Activated CD4-positive, alpha-beta memory T cell treated with anti-CD3 and anti-CD28 coated beads for 36 hours (primary cell): ENCODE measurements at regions of chr5 and their contacts with region 1.

Region 1: DNA sequence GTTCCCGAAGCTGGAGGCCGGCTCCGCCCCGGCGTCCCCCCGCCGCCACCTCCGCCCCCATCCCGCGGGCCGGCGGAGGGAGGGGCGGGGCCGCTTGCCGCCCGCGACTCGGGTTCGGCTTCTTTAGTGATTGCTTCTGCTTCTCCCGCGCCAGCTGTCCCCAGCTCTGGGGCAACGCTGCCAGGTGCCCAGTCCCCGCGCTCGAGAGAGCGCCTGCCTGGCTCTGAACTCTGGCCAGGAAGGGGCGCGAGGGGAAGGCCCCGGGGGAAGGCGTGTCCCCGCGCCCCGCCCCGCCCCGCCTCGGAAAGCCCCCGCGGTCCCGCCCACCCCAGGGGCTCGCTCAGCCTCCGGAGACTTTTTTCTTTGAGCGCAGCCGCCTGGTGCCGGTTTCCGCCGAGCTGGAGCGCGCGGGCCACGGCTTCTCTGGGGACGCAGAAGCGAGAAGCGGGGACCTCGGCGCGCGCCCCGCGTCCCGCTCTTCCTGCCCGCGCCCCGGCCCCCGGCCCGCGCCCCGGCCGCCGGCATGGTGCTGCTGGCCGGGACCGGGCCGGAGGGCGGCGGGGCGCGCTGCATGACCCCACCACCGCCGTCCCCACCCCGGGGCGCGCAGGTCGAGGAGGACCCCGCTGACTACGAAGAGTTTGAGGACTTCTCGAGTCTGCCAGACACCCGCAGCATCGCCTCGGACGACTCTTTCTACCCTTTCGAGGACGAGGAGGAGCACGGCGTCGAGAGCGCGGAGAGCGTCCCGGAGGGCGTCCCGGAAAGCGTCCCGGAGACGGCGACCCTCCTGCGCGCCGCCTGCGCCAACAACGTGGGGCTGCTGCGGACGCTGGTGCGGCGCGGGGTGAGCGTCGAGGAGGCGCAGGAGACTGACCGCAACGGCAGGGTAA is at the start of gene ANKRD33B:
- DNase-seq: peak; percentile 88
- H3K4me3 Mint-ChIP-seq: peak within 1 kb of the TSS; percentile 84
- H3K27ac Mint-ChIP-seq: peak within 1 kb of the TSS; percentile 79
- H3K4me1 Mint-ChIP-seq: peaks cover 21% of the 10 kb centered on the region
- H3K27me3 Mint-ChIP-seq: peaks cover 3% of the 10 kb centered on the region
- total RNA-seq, gene ANKRD33B: 9.9 to 10.0 TPM

Region 2: DNA sequence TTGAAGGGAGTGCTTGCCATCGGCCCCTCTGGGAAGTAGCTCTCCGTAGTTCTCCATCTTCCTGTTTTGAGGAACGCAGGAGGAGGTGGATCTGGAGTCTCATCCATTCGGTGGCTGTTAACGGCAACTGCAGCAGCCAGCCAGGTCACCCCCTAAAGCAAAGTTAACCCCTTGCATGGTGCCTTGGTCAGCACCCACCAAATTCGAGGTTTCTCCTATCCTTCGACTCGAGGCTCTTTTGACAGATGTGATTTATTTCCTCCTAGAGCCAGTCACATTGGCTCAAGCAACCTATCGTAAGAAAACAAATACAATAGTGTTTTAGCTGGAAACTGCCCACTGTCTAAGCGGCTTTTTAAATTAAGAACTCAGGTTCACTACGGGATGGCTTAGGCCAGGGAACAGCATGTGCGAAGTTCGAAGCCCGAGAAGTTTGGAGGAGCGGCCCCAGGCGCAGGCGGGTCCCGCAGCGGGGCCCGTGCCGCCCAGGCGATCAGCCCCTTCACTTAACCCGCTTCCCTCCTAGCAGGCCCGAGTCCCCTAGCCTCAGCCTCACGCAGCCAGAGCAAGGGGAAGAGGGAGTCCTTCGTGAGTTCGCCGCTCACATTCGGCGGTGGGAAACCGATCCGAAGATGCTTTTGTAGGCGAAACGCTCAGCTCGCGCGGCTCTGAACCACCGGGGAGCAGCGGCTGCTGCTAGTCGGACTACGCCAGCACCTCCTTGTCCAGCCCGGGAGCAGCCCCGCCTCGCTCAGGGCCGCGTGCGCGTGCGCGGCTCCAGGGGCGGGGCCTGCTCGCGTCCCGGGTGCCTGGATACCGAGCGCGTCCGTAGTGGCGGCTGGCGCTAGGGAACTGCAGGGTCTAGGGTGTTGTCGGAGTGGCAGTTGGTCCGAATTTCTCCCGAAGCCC is 122.9 kb before region 1 on chr5 and contains the start of gene ROPN1L:
- CTCF ChIA-PET with region 1: no interaction called
- POLR2A ChIA-PET with region 1: no interaction called
- intact Hi-C with region 1: loop called (anchors 10 kb)
- DNase-seq: peak; percentile 86
- H3K4me3 Mint-ChIP-seq: peak within 1 kb of the TSS; percentile 78
- H3K27ac Mint-ChIP-seq: no peak within 1 kb of the TSS
- H3K4me1 Mint-ChIP-seq: peaks cover 33% of the 10 kb centered on the region
- H3K27me3 Mint-ChIP-seq: no peaks in the 10 kb centered on the region
- total RNA-seq, gene ROPN1L: not detected

Region 3: GRCh38 chr5:10577371-10578292 is 13.4 kb after region 1 on chr5:
- CTCF ChIA-PET with region 1: interaction called, 4 read pairs
- POLR2A ChIA-PET with region 1: interaction called, 3 read pairs
- intact Hi-C with region 1: loop called (anchors 1 kb)
- DNase-seq: no peak
- H3K4me3 Mint-ChIP-seq: no peak overlapping the region
- H3K27ac Mint-ChIP-seq: no peak overlapping the region
- H3K4me1 Mint-ChIP-seq: peaks cover 57% of the 10 kb centered on the region
- H3K27me3 Mint-ChIP-seq: no peaks in the 10 kb centered on the region